CD4-positive, alpha-beta T cell (primary cell): ENCODE measurements at regions of chr18 and their contacts with region 1.

Region 1: DNA sequence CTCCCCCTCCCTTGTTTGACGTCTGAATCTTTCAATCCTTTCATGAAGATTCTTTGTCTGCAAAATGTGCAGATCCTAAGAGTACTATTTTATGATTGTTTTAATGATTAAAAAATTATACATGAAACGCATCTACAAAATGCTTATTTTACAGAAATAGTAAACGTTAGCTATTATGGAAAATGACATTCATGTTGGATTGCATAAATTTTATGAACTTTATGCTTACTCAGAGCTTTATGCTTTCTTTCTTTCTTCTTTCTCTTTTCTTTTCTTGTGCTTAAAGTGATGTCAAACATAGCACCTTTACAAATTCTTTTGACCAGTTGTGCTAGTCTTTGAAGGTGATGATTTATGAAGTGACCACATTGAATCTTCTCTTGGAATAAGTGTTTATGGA is 805.4 kb downstream of the ADCYAP1 start:
- DNase-seq: no peak
- ATAC-seq: no peak
- H3K4me3 ChIP-seq: no peak overlapping the region
- H3K4me3 Mint-ChIP-seq: no peak overlapping the region
- H3K27ac ChIP-seq: no peak overlapping the region
- H3K27ac Mint-ChIP-seq: no peak overlapping the region
- H3K4me1 ChIP-seq: no peaks in the 10 kb centered on the region
- H3K4me1 Mint-ChIP-seq: no peaks in the 10 kb centered on the region
- H3K27me3 ChIP-seq: no peaks in the 10 kb centered on the region
- H3K27me3 Mint-ChIP-seq: no peaks in the 10 kb centered on the region
- CTCF ChIP-seq: no peak

Region 2: DNA sequence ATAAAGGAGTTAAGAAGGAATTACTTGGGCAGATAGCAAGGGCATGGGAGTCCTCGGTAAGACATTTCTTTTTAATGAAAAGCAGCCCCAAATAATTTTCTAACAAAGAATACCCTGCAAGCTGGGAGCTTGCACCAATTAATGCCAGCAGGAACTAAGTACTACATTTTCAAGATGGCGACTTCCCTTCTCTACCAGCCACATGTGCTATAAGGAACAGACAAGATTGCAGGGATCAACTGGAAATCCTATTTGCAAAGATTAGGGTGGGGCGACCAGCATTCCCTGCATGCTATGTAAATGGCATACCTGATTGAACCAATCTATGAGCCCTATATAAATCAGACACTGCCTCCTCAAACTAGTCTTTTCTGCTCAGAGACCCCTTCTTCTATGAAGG is 22.0 kb after region 1 on chr18:
- CTCF ChIA-PET with region 1: no interaction called
- POLR2A ChIA-PET with region 1: no interaction called
- intact Hi-C with region 1: loop called in 1 of 2 experiments (anchors 1 kb)
- DNase-seq: no peak
- ATAC-seq: no peak
- H3K4me3 ChIP-seq: no peak overlapping the region
- H3K4me3 Mint-ChIP-seq: no peak overlapping the region
- H3K27ac ChIP-seq: no peak overlapping the region
- H3K27ac Mint-ChIP-seq: no peak overlapping the region
- H3K4me1 ChIP-seq: no peaks in the 10 kb centered on the region
- H3K4me1 Mint-ChIP-seq: no peaks in the 10 kb centered on the region
- H3K27me3 ChIP-seq: no peaks in the 10 kb centered on the region
- H3K27me3 Mint-ChIP-seq: no peaks in the 10 kb centered on the region
- CTCF ChIP-seq: no peak